ENCODE measurements at regions of chr2 and their contacts with region 1.

Region 1: DNA sequence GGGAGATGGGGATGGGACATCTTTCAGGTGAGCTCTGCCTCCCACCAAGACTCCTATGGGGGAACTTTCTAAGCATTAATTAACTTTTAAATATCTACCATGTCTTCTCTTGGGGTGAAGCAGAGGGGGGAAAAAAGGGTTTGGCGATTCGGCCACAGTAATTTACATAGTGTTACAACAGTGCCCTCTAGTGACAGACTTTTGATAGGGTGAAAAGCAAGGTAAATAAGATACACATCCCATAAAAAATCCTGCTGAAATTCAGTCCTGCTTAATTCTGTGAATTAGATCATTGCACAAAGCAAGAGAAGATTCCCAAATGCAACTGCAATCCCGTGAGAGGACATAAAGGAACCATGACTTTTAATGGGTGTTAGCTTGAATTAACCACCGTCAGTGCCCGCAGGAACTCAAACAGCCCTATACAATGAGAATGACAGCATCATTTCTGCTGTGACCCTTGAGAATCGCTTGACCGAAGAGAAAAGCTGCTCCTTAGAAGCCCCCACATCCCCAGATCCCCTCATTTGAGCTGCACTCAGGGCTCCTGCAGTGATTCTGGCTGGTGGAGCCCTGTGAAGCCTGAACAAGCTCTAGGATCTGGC is 32.8 kb downstream of the FAM124B start:
- DNase-seq: no peak
- ATAC-seq: peak; percentile 78
- H3K4me3 ChIP-seq: no peak overlapping the region
- H3K27ac ChIP-seq: no peak overlapping the region
- H3K4me1 ChIP-seq: no peaks in the 10 kb centered on the region
- H3K27me3 ChIP-seq: no peaks in the 10 kb centered on the region
- CTCF ChIP-seq: peak; percentile 39 to 61 (median 48); a peak in 5 of 6 replicates
- EP300 ChIP-seq: no peak
- POLR2A ChIP-seq: no peak
- RAD21 ChIP-seq: peak; percentile 39

Region 2: GRCh38 chr2:223930103-223930976 is 438.8 kb before region 1 on chr2:
- CTCF ChIA-PET with region 1: no interaction called
- POLR2A ChIA-PET with region 1: no interaction called
- RAD21 ChIA-PET with region 1: no interaction called
- SMC1A ChIA-PET with region 1: no interaction called
- in situ Hi-C with region 1: no loop called
- intact Hi-C with region 1: no loop called
- DNase-seq: no peak
- ATAC-seq: peak; percentile 45
- H3K4me3 ChIP-seq: no peak overlapping the region
- H3K27ac ChIP-seq: no peak overlapping the region
- H3K4me1 ChIP-seq: peaks cover 4% of the 10 kb centered on the region
- H3K27me3 ChIP-seq: no peaks in the 10 kb centered on the region
- CTCF ChIP-seq: no peak
- EP300 ChIP-seq: no peak
- POLR2A ChIP-seq: no peak
- RAD21 ChIP-seq: no peak

Region 3: DNA sequence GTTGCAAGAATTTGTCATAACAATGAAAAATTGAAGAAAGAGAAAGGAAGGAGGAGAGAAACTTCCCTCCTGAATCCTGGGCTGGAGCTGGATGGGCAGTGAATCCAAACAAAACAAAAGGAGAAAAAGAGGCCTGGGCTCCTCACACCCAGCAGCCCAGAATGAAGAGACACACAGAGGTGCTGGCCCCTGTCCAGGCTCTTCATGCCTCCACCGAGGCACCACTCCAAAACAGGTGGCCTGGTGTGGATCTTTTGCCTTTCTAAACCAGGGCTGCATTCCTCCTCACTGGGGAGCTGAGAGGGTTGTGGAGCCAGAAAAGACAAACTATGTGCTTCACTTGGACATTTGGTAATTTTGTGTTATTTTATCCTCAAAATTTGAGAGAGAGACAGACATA is 43.2 kb before region 1 on chr2:
- CTCF ChIA-PET with region 1: no interaction called
- POLR2A ChIA-PET with region 1: no interaction called
- RAD21 ChIA-PET with region 1: no interaction called
- SMC1A ChIA-PET with region 1: no interaction called
- in situ Hi-C with region 1: no loop called
- intact Hi-C with region 1: no loop called
- DNase-seq: no peak
- ATAC-seq: no peak
- H3K4me3 ChIP-seq: no peak overlapping the region
- H3K27ac ChIP-seq: no peak overlapping the region
- H3K4me1 ChIP-seq: no peaks in the 10 kb centered on the region
- H3K27me3 ChIP-seq: peaks cover 0 to 11% of the 10 kb centered on the region in 2 experiments; a peak in 3 of 4 replicates
- CTCF ChIP-seq: no peak
- EP300 ChIP-seq: no peak
- POLR2A ChIP-seq: no peak
- RAD21 ChIP-seq: no peak

Region 4: DNA sequence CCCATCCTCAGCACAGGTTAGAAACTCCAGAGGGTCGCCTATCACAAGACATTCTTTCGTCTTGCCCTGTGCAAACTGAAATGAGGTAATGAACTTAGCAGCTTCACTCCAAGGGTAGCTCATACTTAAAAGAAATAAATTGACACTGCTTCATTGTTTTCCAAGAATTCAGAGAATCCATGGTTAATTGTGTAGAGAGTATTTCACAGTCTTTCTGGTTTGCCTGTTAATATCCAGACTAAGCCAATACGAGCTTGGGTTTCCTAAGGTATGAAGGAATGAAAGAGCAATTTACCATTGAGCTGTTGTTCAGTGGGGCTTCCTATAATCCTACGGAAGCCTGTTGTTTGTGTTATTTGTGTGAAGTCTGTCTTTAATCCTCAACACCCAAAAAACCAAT is 25.9 kb before region 1 on chr2:
- CTCF ChIA-PET with region 1: interaction called, 12 read pairs
- POLR2A ChIA-PET with region 1: no interaction called
- RAD21 ChIA-PET with region 1: no interaction called
- SMC1A ChIA-PET with region 1: no interaction called
- in situ Hi-C with region 1: no loop called
- intact Hi-C with region 1: no loop called
- DNase-seq: no peak
- ATAC-seq: no peak
- H3K4me3 ChIP-seq: no peak overlapping the region
- H3K27ac ChIP-seq: no peak overlapping the region
- H3K4me1 ChIP-seq: no peaks in the 10 kb centered on the region
- H3K27me3 ChIP-seq: peaks cover 0 to 5% of the 10 kb centered on the region in 2 experiments; a peak in 2 of 4 replicates
- CTCF ChIP-seq: no peak
- EP300 ChIP-seq: no peak
- POLR2A ChIP-seq: no peak
- RAD21 ChIP-seq: no peak

Measured in GM12878 (cell line).